Natural killer cell (primary cell): ENCODE measurements at regions of chrX and their contacts with region 1.

Region 1: GRCh38 chrX:114924856-114925255 is 92.6 kb downstream of the IL13RA2 start:
- DNase-seq: no peak
- ATAC-seq: no peak
- H3K4me3 ChIP-seq: no peak overlapping the region
- H3K4me3 Mint-ChIP-seq: no peak overlapping the region
- H3K27ac ChIP-seq: no peak overlapping the region
- H3K27ac Mint-ChIP-seq: no peak overlapping the region
- H3K4me1 ChIP-seq: no peaks in the 10 kb centered on the region
- H3K4me1 Mint-ChIP-seq: no peaks in the 10 kb centered on the region
- H3K27me3 ChIP-seq: no peaks in the 10 kb centered on the region
- H3K27me3 Mint-ChIP-seq: peaks cover 0 to 13% of the 10 kb centered on the region in 2 donors
- CTCF ChIP-seq: no peak

Region 2: DNA sequence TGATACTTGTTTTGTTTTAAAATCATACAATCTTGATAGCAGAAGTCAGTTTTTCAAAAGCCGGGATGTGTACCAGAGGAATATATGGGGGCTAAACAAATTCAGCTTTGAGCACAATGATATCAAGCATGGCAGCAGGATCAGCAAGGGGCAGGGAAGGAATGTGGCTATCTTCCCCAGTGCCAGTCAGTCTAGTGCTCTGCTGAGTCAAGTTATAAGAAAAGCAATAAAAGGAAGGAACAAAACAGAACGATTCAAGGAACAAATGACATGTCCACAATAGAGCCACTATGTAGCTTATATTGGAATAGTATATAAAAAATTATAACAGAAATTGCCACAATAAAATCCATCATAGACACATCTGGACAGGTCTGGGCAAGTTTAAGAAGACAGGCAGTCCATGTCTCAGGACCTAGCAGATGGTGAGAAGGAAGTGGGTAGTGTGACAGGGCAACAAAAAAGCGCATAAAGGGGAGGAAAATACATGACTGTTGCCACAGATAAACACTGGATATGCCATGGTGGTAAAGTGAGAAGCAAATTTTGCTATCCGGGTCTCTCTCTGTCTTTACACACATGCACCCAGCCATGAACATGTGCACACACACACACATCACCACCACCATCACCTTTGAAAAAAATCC is 859.2 kb before region 1 on chrX:
- intact Hi-C with region 1: loop called (anchors 10 kb)
- DNase-seq: no peak
- ATAC-seq: no peak
- H3K4me3 ChIP-seq: no peak overlapping the region
- H3K4me3 Mint-ChIP-seq: no peak overlapping the region
- H3K27ac ChIP-seq: no peak overlapping the region
- H3K27ac Mint-ChIP-seq: no peak overlapping the region
- H3K4me1 ChIP-seq: no peaks in the 10 kb centered on the region
- H3K4me1 Mint-ChIP-seq: no peaks in the 10 kb centered on the region
- H3K27me3 ChIP-seq: no peaks in the 10 kb centered on the region
- H3K27me3 Mint-ChIP-seq: no peaks in the 10 kb centered on the region
- CTCF ChIP-seq: no peak